ENCODE measurements at regions of chr1 and their contacts with region 1.

Region 1: GRCh38 chr1:112619520-112620376 is at the start of gene CAPZA1:
- DNase-seq: peak; percentile 95
- ATAC-seq: peak; percentile 85
- H3K4me3 Mint-ChIP-seq: peak within 1 kb of the TSS; percentile 99
- H3K27ac Mint-ChIP-seq: peak within 1 kb of the TSS; percentile 100
- H3K4me1 Mint-ChIP-seq: peaks cover 29% of the 10 kb centered on the region
- H3K27me3 Mint-ChIP-seq: no peaks in the 10 kb centered on the region
- CTCF ChIP-seq: no peak
- total RNA-seq, gene CAPZA1: 220 to 230 TPM

Region 2: GRCh38 chr1:112637254-112638116 is 17.7 kb after region 1 on chr1:
- CTCF ChIA-PET with region 1: interaction called, 4 read pairs
- POLR2A ChIA-PET with region 1: interaction called, 29 read pairs
- intact Hi-C with region 1: no loop called
- DNase-seq: no peak
- ATAC-seq: no peak
- H3K4me3 Mint-ChIP-seq: no peak overlapping the region
- H3K27ac Mint-ChIP-seq: peak overlapping the region; percentile 73
- H3K4me1 Mint-ChIP-seq: peaks cover 53% of the 10 kb centered on the region
- H3K27me3 Mint-ChIP-seq: no peaks in the 10 kb centered on the region
- CTCF ChIP-seq: no peak

Region 3: GRCh38 chr1:112687336-112687735 is 67.6 kb after region 1 on chr1:
- CTCF ChIA-PET with region 1: no interaction called
- POLR2A ChIA-PET with region 1: no interaction called
- intact Hi-C with region 1: no loop called
- DNase-seq: no peak
- ATAC-seq: no peak
- H3K4me3 Mint-ChIP-seq: no peak overlapping the region
- H3K27ac Mint-ChIP-seq: no peak overlapping the region
- H3K4me1 Mint-ChIP-seq: peaks cover 3% of the 10 kb centered on the region
- H3K27me3 Mint-ChIP-seq: no peaks in the 10 kb centered on the region
- CTCF ChIP-seq: no peak

Region 4: DNA sequence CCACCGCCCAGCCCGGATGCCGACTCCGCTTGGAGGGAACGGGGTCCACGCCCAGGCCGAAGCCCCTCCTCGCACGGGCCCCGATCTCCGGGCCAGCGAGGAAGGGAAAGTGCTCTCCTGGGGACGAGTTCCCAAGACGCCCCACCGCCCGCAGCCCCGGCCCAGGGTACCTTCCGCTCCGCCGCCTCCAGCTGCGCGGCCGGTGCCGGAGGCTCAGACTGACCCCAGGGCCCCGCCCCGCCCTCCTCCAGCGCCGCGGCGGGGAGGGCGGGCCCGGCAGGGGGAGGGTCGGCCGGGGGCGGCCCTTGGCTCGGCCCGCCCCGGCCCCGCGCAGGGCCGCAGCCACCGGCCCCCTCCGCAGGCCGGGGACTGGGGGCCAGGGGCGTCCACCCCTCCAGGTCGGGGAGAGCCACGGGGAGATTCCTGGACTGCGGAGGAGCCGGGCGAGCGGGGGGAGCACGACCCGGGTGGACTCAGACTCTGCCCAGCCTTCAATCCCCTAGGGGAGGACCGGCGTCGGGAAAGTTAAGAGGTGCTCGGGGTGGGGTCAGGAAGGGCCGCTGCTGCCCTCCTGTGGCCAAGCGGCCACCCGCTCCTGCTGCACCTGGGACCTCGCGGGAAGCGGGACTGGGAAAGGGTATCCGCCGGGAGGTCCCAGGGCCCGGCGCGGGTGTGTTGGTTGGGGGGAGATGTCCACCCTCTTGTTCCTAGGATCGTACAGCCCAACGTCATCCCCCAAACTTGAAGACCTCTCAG is 87.3 kb after region 1 on chr1 and contains the start of gene RHOC:
- CTCF ChIA-PET with region 1: interaction called, 12 read pairs
- POLR2A ChIA-PET with region 1: interaction called, 10 read pairs
- intact Hi-C with region 1: loop called (anchors 10 kb)
- DNase-seq: peak; percentile 75
- ATAC-seq: peak; percentile 50
- H3K4me3 Mint-ChIP-seq: peak within 1 kb of the TSS; percentile 71
- H3K27ac Mint-ChIP-seq: no peak within 1 kb of the TSS
- H3K4me1 Mint-ChIP-seq: peaks cover 40% of the 10 kb centered on the region
- H3K27me3 Mint-ChIP-seq: peaks cover 13% of the 10 kb centered on the region
- CTCF ChIP-seq: peak; percentile 89
- total RNA-seq, gene RHOC: 34.2 to 34.7 TPM